Activated CD8-positive, alpha-beta T cell treated with anti-CD3 and anti-CD28 coated beads for 36 hours (primary cell): ENCODE measurements at regions of chr11 and their contacts with region 1.

Region 1: GRCh38 chr11:86162239-86162638 is 82.3 kb upstream of the EED start:
- DNase-seq: no peak
- ATAC-seq: no peak
- H3K4me3 Mint-ChIP-seq: no peak overlapping the region
- H3K27ac Mint-ChIP-seq: no peak overlapping the region
- H3K4me1 Mint-ChIP-seq: peaks cover 10% of the 10 kb centered on the region
- H3K27me3 Mint-ChIP-seq: no peaks in the 10 kb centered on the region
- CTCF ChIP-seq: no peak

Region 2: DNA sequence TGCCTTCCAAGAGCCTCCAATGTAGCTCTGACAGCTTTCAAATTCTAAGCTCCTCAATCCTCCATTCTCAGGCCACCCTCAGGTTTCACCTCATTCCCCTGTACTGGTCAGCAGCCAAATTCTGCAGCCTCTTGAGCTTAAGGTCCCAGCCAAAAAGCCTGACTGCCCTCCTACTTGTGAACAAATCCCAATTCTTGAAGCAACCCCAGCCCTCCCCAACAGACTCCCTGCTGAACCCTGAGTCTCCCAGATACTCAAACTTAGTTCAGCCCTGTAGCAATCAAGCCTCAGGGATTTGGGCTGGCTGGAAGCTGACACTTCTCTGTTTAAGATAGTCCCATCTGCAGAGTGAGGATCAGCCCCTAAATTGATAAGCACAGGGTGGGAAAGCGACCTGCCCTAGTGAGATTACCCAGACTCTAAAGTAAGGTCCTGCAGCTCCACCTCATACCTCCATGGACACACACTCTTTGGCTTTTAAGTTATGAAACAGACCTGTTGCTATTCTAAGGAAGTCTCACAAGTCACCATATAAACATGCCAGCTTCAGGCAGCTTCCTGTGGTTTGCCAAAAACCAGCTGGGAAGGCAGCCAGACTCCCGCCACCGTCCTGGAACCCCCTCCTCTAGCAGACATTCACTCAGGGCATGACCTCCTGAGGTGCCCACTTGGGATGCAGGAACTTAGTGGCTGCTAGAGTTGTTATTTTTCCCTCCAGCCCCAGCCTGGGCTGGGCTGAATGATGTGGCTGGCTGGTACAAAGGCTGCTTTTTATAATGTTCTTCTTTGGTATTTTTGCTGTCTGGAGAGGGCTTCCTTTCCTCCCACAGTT is 10.8 kb before region 1 on chr11:
- CTCF ChIA-PET with region 1: interaction called, 10 read pairs
- POLR2A ChIA-PET with region 1: interaction called, 3 read pairs
- intact Hi-C with region 1: no loop called
- DNase-seq: no peak
- ATAC-seq: peak; percentile 47
- H3K4me3 Mint-ChIP-seq: no peak overlapping the region
- H3K27ac Mint-ChIP-seq: peak overlapping the region; percentile 7
- H3K4me1 Mint-ChIP-seq: peaks cover 22% of the 10 kb centered on the region
- H3K27me3 Mint-ChIP-seq: no peaks in the 10 kb centered on the region
- CTCF ChIP-seq: no peak

Region 3: GRCh38 chr11:86174101-86175046 is 12.1 kb after region 1 on chr11:
- CTCF ChIA-PET with region 1: interaction called, 5 read pairs
- POLR2A ChIA-PET with region 1: interaction called, 24 read pairs
- intact Hi-C with region 1: no loop called
- DNase-seq: no peak
- ATAC-seq: peak; percentile 19
- H3K4me3 Mint-ChIP-seq: no peak overlapping the region
- H3K27ac Mint-ChIP-seq: no peak overlapping the region
- H3K4me1 Mint-ChIP-seq: peaks cover 27% of the 10 kb centered on the region
- H3K27me3 Mint-ChIP-seq: no peaks in the 10 kb centered on the region
- CTCF ChIP-seq: no peak

Region 4: GRCh38 chr11:86287468-86287796 is 125.2 kb after region 1 on chr11:
- CTCF ChIA-PET with region 1: no interaction called
- POLR2A ChIA-PET with region 1: no interaction called
- intact Hi-C with region 1: no loop called
- DNase-seq: no peak
- ATAC-seq: no peak
- H3K4me3 Mint-ChIP-seq: peak overlapping the region; percentile 51
- H3K27ac Mint-ChIP-seq: peak overlapping the region; percentile 78
- H3K4me1 Mint-ChIP-seq: peaks cover 75% of the 10 kb centered on the region
- H3K27me3 Mint-ChIP-seq: no peaks in the 10 kb centered on the region
- CTCF ChIP-seq: no peak